WTC11 (cell line): ENCODE measurements at regions of chr10 and their contacts with region 1.

Region 1: DNA sequence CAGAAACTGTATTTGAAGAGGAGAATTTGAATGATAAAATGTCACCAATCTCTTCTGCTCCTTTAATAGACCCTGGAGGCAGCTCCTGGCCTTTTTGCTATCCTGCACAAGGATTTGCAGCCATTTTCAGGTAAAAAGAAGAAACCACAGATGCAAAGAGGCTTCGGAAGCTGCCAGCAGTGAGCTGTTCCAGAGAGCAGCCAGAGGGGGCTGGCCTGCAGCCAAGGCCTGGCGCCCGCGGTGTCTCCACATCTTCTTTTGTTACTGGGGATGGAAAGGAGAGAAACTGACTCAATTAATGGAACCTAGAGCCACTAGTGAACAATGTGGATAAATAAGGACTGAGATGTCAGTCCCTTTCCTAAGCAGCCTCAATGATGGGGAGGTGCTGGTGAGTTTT is 23.9 kb upstream of the GPR26 start:
- DNase-seq: no peak
- ATAC-seq: peak; percentile 35
- H3K4me3 Mint-ChIP-seq: no peak overlapping the region
- H3K27ac Mint-ChIP-seq: no peak overlapping the region
- H3K4me1 Mint-ChIP-seq: peaks cover 45% of the 10 kb centered on the region
- H3K27me3 Mint-ChIP-seq: no peaks in the 10 kb centered on the region
- CTCF ChIP-seq: no peak

Region 2: DNA sequence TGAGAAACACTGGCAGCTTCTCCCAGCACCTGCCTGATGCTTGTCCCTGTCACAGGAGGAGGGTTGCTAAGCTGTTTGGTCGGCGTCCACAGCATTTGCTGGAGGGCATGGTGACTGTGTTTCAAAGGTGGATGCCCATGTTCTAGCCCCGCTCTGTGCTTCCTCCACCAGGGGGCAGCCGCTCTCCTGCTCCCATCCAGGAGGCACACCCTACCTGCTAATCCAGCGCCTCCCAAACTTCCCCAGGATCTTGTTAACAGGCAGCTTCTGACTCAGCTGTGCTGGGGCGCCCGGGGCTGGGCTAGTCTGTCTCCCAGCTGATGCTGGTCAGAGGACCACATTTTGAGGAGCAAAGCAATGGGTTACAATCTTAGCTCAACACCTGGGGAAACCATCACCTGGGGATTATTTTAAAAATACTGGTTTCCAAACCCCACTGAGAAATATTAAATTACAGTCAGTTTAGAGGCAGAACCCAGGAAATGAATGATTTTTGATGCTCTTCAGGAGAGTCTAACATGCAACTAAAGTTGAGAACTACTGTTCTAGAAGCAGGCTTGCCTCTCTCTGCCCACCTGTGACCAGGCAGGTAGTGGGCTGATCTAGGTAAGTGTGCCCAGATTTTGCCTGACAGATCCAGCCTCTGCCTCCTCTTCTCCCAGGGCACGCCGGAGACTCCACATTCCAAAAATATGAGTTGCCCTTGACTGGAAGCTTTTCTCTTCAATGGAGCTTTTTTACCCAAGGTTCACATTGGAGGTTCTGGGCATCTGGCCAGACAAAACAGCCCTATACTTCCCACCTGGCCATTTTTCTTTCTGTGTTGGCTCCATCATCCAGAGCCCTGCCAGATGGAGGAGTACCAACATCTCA is 68.8 kb before region 1 on chr10:
- CTCF ChIA-PET with region 1: interaction called, 11 read pairs
- POLR2A ChIA-PET with region 1: no interaction called
- DNase-seq: peak; percentile 92
- ATAC-seq: peak; percentile 98
- H3K4me3 Mint-ChIP-seq: no peak overlapping the region
- H3K27ac Mint-ChIP-seq: no peak overlapping the region
- H3K4me1 Mint-ChIP-seq: peaks cover 20% of the 10 kb centered on the region
- H3K27me3 Mint-ChIP-seq: peaks cover 2% of the 10 kb centered on the region
- CTCF ChIP-seq: peak; percentile 63

Region 3: DNA sequence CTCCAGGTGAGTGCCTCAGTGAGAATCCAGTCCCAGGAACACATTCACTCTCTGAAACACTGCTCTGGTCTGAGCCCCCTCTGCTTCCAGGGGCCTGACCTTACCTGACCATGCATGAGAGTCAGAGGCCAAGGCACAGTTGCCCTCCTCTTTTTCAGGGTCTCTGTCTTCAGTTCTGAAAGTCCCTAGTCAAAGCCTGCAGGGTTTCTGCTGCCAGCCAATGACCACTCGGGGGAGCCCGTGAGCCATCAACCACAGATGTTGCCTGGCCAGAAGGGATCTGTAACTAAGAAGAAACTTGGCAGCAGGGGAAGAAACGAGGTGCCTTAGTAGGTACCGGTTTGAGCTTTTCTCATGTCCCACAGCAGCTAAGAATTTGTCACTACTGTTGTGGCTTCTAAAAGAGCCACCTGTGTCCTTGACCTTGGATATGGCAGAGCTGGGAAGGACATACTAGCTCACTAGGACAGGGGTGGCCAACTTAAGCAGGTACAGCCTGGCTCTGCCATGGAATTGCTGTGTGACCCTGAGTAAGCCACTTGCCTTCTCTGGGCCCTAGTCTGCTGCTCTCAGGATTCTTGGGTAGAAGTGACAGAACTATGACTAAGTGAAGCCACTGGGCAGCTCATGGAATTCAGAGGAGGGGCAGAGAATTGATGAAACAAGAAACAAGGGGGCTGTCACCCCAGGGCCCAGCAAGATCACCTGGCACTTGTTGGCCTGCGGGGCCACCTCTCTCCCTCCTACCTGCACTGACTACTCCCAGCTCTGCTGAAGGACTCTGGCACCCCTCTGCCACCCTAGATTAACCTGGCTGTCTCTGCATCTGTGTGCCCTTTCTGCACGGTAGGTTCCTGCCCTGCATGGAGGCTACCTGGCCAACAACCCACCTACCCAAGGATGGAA is 60.0 kb before region 1 on chr10:
- CTCF ChIA-PET with region 1: interaction called, 46 read pairs
- POLR2A ChIA-PET with region 1: no interaction called
- DNase-seq: peak; percentile 92
- ATAC-seq: peak; percentile 68
- H3K4me3 Mint-ChIP-seq: no peak overlapping the region
- H3K27ac Mint-ChIP-seq: no peak overlapping the region
- H3K4me1 Mint-ChIP-seq: peaks cover 27% of the 10 kb centered on the region
- H3K27me3 Mint-ChIP-seq: peaks cover 19% of the 10 kb centered on the region
- CTCF ChIP-seq: peak; percentile 60

Region 4: DNA sequence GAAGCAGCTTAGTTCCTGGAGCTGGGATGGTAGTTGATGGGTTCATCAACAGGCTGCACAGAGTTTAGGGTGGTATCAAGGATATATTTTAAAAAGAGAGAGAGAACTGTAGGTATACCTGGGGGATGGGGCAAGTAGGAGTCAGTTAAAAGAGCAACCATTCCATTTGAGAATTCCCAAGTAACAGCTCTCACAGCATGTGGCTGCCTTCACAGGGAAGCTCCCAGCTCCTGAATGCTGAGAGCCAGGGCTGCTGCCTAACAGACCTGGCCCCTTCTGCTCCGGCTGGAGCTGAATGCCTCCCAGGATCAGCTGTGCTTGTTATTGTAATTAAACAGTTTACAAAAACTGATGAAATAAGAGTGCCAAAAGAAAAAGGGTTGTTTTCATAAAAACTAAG is 34.9 kb before region 1 on chr10:
- CTCF ChIA-PET with region 1: interaction called, 32 read pairs
- POLR2A ChIA-PET with region 1: no interaction called
- DNase-seq: peak; percentile 73
- ATAC-seq: peak; percentile 93
- H3K4me3 Mint-ChIP-seq: peak overlapping the region; percentile 47
- H3K27ac Mint-ChIP-seq: peak overlapping the region; percentile 81
- H3K4me1 Mint-ChIP-seq: peaks cover 52% of the 10 kb centered on the region
- H3K27me3 Mint-ChIP-seq: peaks cover 15% of the 10 kb centered on the region
- CTCF ChIP-seq: no peak

Region 5: DNA sequence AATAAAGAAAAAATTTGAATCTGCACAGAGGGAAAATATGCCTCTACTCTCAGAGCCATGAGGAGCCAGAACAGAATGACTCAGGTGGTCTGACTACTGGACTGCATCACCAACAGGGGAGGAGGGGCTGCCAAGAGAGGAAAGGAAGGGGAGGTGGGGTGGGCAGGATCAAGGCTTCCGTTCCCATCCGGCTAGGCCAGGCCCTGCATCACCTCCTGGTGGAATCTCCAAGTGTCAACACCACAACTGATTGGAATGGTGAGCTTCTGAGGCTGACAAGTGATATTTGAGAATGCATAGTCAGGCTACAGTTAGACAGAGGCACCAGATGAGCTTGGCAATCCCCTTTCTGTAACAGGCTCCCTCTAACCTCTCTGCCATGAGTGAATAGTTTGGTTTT is 13.5 kb after region 1 on chr10:
- CTCF ChIA-PET with region 1: interaction called, 18 read pairs
- POLR2A ChIA-PET with region 1: no interaction called
- DNase-seq: peak; percentile 76
- ATAC-seq: peak; percentile 98
- H3K4me3 Mint-ChIP-seq: no peak overlapping the region
- H3K27ac Mint-ChIP-seq: no peak overlapping the region
- H3K4me1 Mint-ChIP-seq: peaks cover 16% of the 10 kb centered on the region
- H3K27me3 Mint-ChIP-seq: no peaks in the 10 kb centered on the region
- CTCF ChIP-seq: no peak